ENCODE measurements at regions of chr17 and their contacts with region 1.

Region 1: DNA sequence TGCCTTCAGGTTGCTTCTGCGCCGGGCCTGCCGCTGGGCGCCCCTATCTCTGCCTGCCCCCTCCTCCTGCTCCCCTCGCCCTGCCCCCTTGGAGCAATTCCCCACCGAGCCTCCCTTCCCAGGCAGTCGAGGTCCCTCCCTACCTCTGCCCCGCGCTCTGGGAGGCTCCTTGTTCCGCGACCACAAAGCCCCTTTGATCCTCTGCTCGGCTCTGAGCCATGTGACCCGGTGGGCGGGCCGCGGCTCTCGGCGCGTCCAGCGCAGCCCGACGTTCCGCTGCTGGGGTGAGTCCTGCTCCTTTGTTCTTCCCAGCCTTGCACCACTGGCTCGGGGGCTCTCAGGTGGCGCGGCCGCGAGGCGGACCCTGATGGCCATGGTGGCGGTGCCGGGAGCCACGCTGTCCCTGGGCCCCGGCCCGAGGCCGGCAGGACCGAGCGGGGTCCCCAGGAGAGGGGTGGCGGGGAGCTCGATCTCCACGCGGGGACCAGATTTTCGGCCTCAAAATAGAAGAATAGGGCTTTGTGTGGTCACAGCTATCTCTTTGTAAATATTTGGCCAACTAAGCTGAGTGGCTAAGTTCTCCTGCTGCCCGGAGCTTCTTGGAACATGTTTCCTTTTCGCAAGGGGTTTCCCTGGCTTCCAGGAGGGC is 310.6 kb downstream of the SEC14L1 start:
- DNase-seq: peak; percentile 68
- H3K4me3 Mint-ChIP-seq: peak overlapping the region; percentile 99
- H3K27ac Mint-ChIP-seq: peak overlapping the region; percentile 93
- H3K4me1 Mint-ChIP-seq: peaks cover 52% of the 10 kb centered on the region
- H3K27me3 Mint-ChIP-seq: no peaks in the 10 kb centered on the region

Region 2: GRCh38 chr17:77049440-77049839 is 401.9 kb before region 1 on chr17:
- intact Hi-C with region 1: no loop called
- DNase-seq: no peak
- H3K4me3 Mint-ChIP-seq: no peak overlapping the region
- H3K27ac Mint-ChIP-seq: no peak overlapping the region
- H3K4me1 Mint-ChIP-seq: no peaks in the 10 kb centered on the region
- H3K27me3 Mint-ChIP-seq: peaks cover 2% of the 10 kb centered on the region

Region 3: GRCh38 chr17:77420804-77421629 is 30.4 kb before region 1 on chr17:
- intact Hi-C with region 1: no loop called
- DNase-seq: no peak
- H3K4me3 Mint-ChIP-seq: peak overlapping the region; percentile 40
- H3K27ac Mint-ChIP-seq: peak overlapping the region; percentile 78
- H3K4me1 Mint-ChIP-seq: peaks cover 37% of the 10 kb centered on the region
- H3K27me3 Mint-ChIP-seq: no peaks in the 10 kb centered on the region

Region 4: DNA sequence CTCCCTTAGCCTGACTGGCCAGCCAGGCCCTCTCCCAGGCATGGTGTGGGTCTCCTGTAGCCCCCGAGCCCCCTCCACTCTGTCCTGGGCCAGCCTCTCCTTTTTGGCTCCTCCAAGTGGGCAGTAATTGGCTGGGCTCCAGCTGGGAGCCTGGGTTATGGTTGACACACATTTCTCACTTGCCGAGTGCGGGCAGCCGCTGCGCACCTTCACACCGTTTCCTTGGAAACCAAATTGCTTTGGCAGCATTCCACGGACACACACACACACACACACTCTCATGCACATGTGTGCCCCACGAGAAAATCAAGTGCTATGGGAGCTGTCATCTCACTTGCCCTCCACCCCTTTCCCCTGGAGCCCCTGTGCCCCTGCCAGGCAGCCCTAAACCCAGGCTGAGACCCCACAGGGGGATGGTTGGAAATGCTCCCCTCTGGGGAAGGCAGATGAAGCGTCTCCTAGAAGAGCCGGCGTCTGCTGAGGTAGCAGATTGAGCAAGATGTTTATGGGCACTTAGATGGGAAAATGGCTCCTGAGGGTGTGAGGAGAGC is 104.4 kb after region 1 on chr17:
- intact Hi-C with region 1: no loop called
- DNase-seq: no peak
- H3K4me3 Mint-ChIP-seq: no peak overlapping the region
- H3K27ac Mint-ChIP-seq: no peak overlapping the region
- H3K4me1 Mint-ChIP-seq: no peaks in the 10 kb centered on the region
- H3K27me3 Mint-ChIP-seq: peaks cover 26% of the 10 kb centered on the region

Region 5: DNA sequence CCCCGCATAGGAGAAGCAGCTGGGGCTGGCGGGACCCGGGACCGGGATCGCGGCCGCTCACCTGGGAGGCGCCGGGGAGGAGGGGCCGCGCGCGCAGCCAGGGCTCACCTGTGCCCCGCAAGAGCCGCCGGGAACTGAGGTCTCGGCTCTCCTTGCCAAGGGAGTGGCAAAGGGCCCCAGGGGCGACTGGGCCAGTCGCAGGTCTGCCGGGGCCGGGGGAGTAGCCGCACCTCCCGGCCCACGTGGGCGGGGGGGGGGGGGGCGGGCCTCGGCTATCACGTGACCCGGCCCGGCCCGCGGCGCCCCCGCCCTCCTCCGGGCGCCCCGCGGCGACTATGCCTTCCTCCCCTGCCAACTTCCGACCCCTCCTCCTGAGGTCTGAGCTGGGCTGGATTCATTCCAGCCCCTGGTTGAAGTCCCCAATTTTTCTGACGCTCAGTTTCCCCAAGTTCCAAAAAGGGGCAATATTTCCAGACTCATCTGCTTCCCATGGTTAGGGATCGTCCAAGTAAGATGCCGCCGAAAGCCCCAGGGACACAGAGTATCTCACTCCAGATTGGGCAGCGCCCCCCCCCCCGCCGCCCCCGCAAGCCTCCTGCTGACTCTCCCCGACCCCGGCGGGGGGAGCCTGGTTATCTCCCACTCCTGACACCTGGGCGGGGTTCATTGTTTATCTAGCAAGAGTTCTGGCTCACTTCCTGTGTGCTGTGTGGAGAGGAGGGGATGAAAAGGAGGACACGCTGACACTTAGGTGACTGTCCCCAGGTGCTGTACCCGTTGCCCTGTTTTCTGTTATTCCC is 677.4 kb after region 1 on chr17 and contains the start of gene TMC6:
- intact Hi-C with region 1: loop called (anchors 10 kb)
- DNase-seq: peak; percentile 68
- H3K4me3 Mint-ChIP-seq: peak within 1 kb of the TSS; percentile 91
- H3K27ac Mint-ChIP-seq: peak within 1 kb of the TSS; percentile 98
- H3K4me1 Mint-ChIP-seq: peaks cover 37% of the 10 kb centered on the region
- H3K27me3 Mint-ChIP-seq: no peaks in the 10 kb centered on the region
- total RNA-seq, gene TMC6: 240 and 241 TPM in 2 replicates